Caco-2 (cell line): ENCODE measurements at regions of chr4 and their contacts with region 1.

Region 1: DNA sequence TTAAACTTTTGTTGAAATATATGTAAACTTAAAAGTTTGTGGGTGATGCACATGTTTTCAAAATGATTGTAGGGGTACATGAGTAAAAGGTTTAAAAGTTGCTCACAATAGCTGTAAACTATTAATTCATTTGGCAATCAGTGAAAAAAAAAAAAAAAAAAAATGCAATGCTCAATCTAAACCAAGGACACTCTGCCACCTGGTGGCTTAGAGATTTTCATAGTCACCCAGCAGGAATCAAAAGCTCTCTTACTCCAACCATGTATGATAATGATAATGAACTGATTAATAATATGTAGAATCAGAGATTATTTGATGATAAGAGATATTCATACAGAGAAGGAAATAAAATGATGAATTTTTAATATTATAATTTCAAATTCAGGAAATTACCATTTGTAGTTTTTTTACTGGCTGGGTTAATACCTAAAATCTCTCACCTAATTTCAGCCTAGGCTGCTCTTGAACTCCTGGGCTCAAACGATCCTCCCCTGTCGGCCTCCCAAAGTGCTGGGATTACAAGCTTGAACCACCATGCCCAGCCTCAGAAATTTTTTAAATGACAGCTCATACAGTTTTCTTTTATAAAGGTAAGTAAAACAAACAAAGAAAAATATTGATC is 46.9 kb upstream of the SLC25A4 start:
- DNase-seq: peak in 1 of 2 experiments; percentile 40
- H3K4me3 ChIP-seq: no peak overlapping the region
- H3K4me3 Mint-ChIP-seq: no peak overlapping the region
- H3K27ac Mint-ChIP-seq: no peak overlapping the region
- H3K4me1 ChIP-seq: no peaks in the 10 kb centered on the region
- H3K4me1 Mint-ChIP-seq: no peaks in the 10 kb centered on the region
- H3K27me3 ChIP-seq: no peaks in the 10 kb centered on the region
- H3K27me3 Mint-ChIP-seq: peaks cover 3% of the 10 kb centered on the region
- CTCF ChIP-seq: peak; percentile 48 to 51

Region 2: GRCh38 chr4:185005216-185005819 is 90.8 kb before region 1 on chr4:
- CTCF ChIA-PET with region 1: interaction called, 5 read pairs
- POLR2A ChIA-PET with region 1: no interaction called
- intact Hi-C with region 1: loop called (anchors 1 kb)
- DNase-seq: peak; percentile 74 to 80
- H3K4me3 ChIP-seq: no peak overlapping the region
- H3K4me3 Mint-ChIP-seq: peak overlapping the region; percentile 2
- H3K27ac Mint-ChIP-seq: no peak overlapping the region
- H3K4me1 ChIP-seq: no peaks in the 10 kb centered on the region
- H3K4me1 Mint-ChIP-seq: no peaks in the 10 kb centered on the region
- H3K27me3 ChIP-seq: no peaks in the 10 kb centered on the region; the same call in 1 of the 2 replicates
- H3K27me3 Mint-ChIP-seq: peaks cover 19% of the 10 kb centered on the region
- CTCF ChIP-seq: peak; percentile 81 to 88

Region 3: GRCh38 chr4:185039508-185040273 is 56.5 kb before region 1 on chr4:
- CTCF ChIA-PET with region 1: interaction called, 20 read pairs
- POLR2A ChIA-PET with region 1: no interaction called
- intact Hi-C with region 1: loop called (anchors 1 kb)
- DNase-seq: peak; percentile 41 to 58
- H3K4me3 ChIP-seq: no peak overlapping the region
- H3K4me3 Mint-ChIP-seq: peak overlapping the region; percentile 61
- H3K27ac Mint-ChIP-seq: no peak overlapping the region
- H3K4me1 ChIP-seq: no peaks in the 10 kb centered on the region
- H3K4me1 Mint-ChIP-seq: peaks cover 12% of the 10 kb centered on the region
- H3K27me3 ChIP-seq: no peaks in the 10 kb centered on the region
- H3K27me3 Mint-ChIP-seq: no peaks in the 10 kb centered on the region
- CTCF ChIP-seq: peak; percentile 67

Region 4: DNA sequence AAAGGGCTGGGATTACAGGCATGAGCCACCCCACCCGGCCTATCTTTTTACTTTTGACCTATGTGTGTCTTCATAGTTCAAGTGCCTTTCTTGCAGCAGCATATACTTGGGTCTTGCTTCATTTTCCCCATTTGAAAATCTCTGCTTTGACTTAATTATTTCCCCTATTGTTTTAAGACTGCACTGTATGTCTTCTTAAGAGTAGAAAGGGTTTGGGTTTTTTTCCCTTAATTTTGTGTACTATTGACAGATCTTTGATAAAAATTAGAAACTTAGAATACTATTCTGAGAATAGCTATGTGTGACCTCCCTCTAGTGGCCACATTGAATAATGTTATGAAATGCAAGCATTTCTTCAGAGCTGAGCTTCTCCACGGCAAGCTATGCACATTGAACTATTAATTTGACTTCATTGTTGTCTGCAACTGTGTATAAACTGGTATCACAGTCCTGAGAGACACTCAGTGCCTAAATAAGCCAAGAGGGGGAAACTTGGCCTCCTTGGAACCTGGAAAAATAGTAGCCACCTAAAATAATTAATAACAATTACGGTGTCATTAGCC is 38.2 kb after region 1 on chr4:
- CTCF ChIA-PET with region 1: interaction called, 6 read pairs
- POLR2A ChIA-PET with region 1: no interaction called
- intact Hi-C with region 1: loop called (anchors 1 kb)
- DNase-seq: peak in 1 of 2 experiments; percentile 41
- H3K4me3 ChIP-seq: no peak overlapping the region
- H3K4me3 Mint-ChIP-seq: no peak overlapping the region
- H3K27ac Mint-ChIP-seq: no peak overlapping the region
- H3K4me1 ChIP-seq: no peaks in the 10 kb centered on the region
- H3K4me1 Mint-ChIP-seq: no peaks in the 10 kb centered on the region
- H3K27me3 ChIP-seq: no peaks in the 10 kb centered on the region
- H3K27me3 Mint-ChIP-seq: peaks cover 3% of the 10 kb centered on the region
- CTCF ChIP-seq: peak; percentile 43 to 74

Region 5: DNA sequence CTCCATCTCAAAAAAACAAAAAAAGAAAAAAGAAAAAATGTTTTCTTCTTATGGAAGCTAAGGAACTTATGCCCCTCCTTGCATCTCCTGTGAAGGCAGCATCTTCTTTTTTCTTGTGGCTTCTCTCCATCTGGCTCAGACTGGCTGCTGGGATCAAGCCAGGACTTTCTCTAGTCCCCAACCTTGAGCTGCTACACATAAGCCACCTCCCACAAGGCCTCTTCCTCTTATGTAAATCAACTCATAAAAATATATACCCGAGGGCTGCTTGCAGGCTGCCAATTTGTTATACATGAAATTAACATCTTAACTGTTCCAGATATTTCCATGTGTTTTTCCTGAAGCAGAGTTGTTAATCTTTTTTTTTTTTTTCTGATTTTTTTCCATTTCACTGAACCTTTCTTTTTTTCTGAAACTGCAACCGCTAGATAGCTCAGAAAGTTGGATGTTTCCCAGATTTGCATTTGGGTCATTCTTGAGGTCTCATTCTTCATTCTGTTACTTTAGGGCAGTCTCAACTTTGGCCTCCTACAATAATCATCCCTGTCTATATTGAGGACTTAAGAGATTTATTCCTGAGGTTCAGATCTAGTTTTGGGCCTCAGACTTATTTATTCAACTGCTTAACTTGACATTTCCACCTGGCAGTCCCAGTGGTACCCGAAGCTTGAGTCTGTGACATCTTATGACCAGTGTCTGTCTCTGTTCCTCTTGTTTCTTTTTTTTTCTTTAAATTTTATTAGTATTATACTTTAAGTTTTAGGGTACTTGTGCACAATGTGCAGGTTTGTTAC is 123.6 kb after region 1 on chr4:
- CTCF ChIA-PET with region 1: no interaction called
- POLR2A ChIA-PET with region 1: no interaction called
- intact Hi-C with region 1: no loop called
- DNase-seq: no peak
- H3K4me3 ChIP-seq: no peak overlapping the region
- H3K4me3 Mint-ChIP-seq: no peak overlapping the region
- H3K27ac Mint-ChIP-seq: no peak overlapping the region
- H3K4me1 ChIP-seq: no peaks in the 10 kb centered on the region
- H3K4me1 Mint-ChIP-seq: no peaks in the 10 kb centered on the region
- H3K27me3 ChIP-seq: no peaks in the 10 kb centered on the region
- H3K27me3 Mint-ChIP-seq: no peaks in the 10 kb centered on the region
- CTCF ChIP-seq: no peak